Naive thymus-derived CD4-positive, alpha-beta T cell (primary cell): ENCODE measurements at regions of chr1 and their contacts with region 1.

Region 1: DNA sequence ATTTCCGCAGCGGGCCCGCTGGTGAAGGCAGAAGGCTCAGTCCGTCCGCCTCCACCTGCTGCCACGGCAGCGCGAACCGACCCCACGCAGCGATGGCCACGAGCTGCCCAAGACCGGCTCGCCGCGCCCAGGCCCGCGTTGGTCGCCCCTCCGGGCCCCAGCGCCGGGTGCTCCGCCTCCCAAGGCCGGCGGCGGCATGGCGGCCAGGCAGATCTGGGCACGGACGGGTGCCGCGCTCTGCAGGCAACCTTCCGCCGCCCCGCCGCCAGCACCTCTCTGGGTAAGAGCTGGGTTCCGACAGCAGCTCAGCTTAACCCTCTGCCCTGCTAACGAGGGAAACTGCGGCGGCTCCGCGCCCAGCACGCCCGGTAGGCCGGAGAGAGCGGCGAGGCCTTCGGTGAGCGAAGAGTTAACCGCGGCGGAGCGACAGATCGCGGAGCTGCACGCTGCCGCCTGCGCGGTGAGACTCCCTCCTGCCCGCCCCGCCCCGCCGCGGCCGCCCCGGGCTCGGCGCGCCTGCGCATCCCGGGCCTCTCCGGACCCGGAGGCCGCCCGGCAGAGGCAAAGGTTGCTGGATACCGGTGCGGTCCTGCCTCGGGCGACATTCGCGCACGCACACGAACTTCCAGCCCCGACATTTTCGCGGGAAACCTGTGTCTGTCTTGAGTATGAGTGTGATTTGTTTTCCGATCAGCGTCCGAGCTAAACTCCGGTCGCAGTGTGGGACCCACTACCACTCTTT is at the start of gene C1orf53:
- DNase-seq: peak; percentile 58 to 87 (median 74)
- ATAC-seq: peak; percentile 94
- H3K4me3 ChIP-seq: peak within 1 kb of the TSS; percentile 71
- H3K4me3 Mint-ChIP-seq: peak within 1 kb of the TSS; percentile 79 to 97 (median 92)
- H3K27ac ChIP-seq: peak within 1 kb of the TSS; percentile 50
- H3K27ac Mint-ChIP-seq: peak within 1 kb of the TSS; percentile 7 to 82 (median 79)
- H3K4me1 ChIP-seq: peaks cover 4% of the 10 kb centered on the region in 2 donors
- H3K4me1 Mint-ChIP-seq: peaks cover 6 to 19% (median 14%) of the 10 kb centered on the region in 7 donors
- H3K27me3 ChIP-seq: peaks cover 0 to 23% of the 10 kb centered on the region in 2 donors
- H3K27me3 Mint-ChIP-seq: peaks cover 46 to 68% (median 54%) of the 10 kb centered on the region in 5 donors
- total RNA-seq, gene C1orf53: not detected

Region 2: GRCh38 chr1:197146197-197146889 is 756.3 kb before region 1 on chr1 and contains the start of gene ASPM:
- CTCF ChIA-PET with region 1: no interaction called
- POLR2A ChIA-PET with region 1: no interaction called
- intact Hi-C with region 1: loop called in 1 of 2 experiments (anchors 5 kb)
- DNase-seq: peak; percentile 87 to 95 (median 93)
- ATAC-seq: peak; percentile 99
- H3K4me3 ChIP-seq: peak within 1 kb of the TSS; percentile 71
- H3K4me3 Mint-ChIP-seq: peak within 1 kb of the TSS; percentile 89 to 98 (median 92)
- H3K27ac ChIP-seq: peak within 1 kb of the TSS; percentile 74
- H3K27ac Mint-ChIP-seq: peak within 1 kb of the TSS; percentile 76 to 96 (median 94)
- H3K4me1 ChIP-seq: peaks cover 0 to 6% of the 10 kb centered on the region in 2 donors
- H3K4me1 Mint-ChIP-seq: peaks cover 7 to 23% (median 11%) of the 10 kb centered on the region in 7 donors
- H3K27me3 ChIP-seq: no peaks in the 10 kb centered on the region
- H3K27me3 Mint-ChIP-seq: peaks cover 0 to 11% (median 4%) of the 10 kb centered on the region in 5 donors
- total RNA-seq, gene ASPM: 0.08 to 48.8 (median 0.24) TPM

Region 3: DNA sequence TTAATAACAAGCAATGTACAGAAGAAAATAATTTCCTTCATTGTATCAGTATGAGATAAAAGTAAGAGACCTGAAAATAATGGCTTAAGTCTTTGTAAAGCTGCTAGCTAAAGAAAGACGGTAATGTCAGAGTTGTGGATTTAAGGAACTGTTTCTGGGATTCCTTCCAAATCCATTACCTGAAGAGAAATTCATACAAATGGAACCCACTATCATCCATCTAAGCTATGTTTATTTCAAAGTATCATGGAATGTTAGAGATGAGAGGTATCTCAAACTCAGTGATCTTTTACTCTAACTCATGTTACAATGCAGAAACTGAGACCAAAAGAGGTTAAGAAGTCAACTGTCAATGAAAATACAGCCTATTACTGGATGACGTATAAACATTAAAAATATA is 325.0 kb before region 1 on chr1:
- CTCF ChIA-PET with region 1: no interaction called
- POLR2A ChIA-PET with region 1: no interaction called
- intact Hi-C with region 1: no loop called
- DNase-seq: no peak
- ATAC-seq: no peak
- H3K4me3 ChIP-seq: no peak overlapping the region
- H3K4me3 Mint-ChIP-seq: no peak overlapping the region
- H3K27ac ChIP-seq: no peak overlapping the region
- H3K27ac Mint-ChIP-seq: no peak overlapping the region
- H3K4me1 ChIP-seq: no peaks in the 10 kb centered on the region
- H3K4me1 Mint-ChIP-seq: peaks cover 0 to 2% (median 0%) of the 10 kb centered on the region in 7 donors
- H3K27me3 ChIP-seq: no peaks in the 10 kb centered on the region
- H3K27me3 Mint-ChIP-seq: no peaks in the 10 kb centered on the region

Region 4: DNA sequence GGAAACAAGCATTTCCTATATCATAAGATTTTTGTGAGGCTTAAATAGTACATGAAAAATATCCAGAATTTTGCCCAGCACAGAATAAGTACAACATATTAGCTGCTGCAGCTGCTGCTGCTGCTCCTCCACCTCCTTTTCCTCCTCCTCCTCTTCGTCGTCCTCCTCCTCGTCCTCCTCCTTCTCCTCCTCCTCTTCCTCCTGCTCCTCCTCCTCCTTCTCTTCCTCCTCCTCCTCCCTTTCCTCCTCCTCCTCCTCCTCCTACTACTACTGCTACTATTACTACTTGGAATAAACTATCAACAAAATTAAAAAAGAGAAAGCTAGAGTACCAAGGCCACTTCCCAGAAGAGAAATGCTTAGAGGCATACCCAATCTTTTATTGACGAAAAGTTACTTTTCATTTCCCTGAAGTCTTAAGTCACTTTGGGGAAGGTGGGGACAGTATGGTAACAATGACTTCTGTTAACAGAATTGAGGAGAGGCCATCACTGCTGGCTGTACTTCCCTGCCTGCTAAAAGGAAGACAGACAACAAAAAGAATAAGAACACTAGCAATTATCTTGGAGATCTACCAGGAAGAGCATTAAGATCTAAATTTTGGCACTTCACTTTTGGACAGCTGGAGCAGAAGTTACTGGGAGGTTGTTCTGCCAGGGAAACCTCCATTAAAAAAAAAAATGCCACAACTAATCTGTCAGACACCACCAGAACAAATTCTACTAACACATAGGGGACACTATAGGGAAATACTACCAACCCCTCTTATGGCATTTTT is 134.4 kb before region 1 on chr1:
- CTCF ChIA-PET with region 1: no interaction called
- POLR2A ChIA-PET with region 1: no interaction called
- intact Hi-C with region 1: no loop called
- DNase-seq: no peak
- ATAC-seq: no peak
- H3K4me3 ChIP-seq: no peak overlapping the region
- H3K4me3 Mint-ChIP-seq: peak overlapping the region in 6 of 10 donors; percentile 8 to 59 (median 31)
- H3K27ac ChIP-seq: no peak overlapping the region
- H3K27ac Mint-ChIP-seq: peak overlapping the region in 8 of 9 donors; percentile 1 to 76 (median 52)
- H3K4me1 ChIP-seq: peaks cover 11 to 14% of the 10 kb centered on the region in 2 donors
- H3K4me1 Mint-ChIP-seq: peaks cover 35 to 86% (median 80%) of the 10 kb centered on the region in 7 donors
- H3K27me3 ChIP-seq: no peaks in the 10 kb centered on the region
- H3K27me3 Mint-ChIP-seq: no peaks in the 10 kb centered on the region

Region 5: DNA sequence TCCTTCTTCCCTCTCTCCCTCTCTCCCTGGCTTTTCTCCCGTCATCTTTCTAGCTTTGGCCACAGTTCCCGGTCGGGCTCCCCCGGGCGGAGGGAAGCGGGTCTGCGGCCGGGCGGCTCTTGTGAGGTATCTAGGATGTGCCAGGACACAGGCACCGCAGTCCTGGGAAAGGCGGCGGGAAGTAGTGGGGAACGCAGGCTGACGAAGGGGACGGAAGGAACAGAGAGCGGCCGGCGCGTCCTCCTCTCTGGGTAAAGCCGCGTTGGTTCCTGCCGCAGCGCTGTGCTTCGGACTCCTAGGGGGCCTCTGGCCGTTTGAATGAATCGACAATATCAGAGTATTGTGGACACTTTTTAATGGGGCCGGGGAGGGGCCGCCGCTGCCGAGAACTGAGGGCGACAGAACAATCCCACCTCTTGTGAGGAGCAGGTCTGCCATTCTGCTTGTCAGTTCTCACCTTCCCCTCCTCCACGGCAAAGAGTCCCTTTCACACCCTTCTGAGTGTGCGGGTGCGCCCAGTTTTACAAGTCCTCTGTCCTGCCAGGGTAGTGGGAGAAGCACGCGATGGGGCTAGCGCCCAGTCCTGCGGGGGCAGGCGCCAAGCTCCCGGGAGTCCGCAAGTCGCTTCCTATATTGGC is 13.4 kb after region 1 on chr1:
- CTCF ChIA-PET with region 1: interaction called, 4 read pairs
- POLR2A ChIA-PET with region 1: interaction called, 3 read pairs
- intact Hi-C with region 1: loop called (anchors 1 kb)
- DNase-seq: peak in 1 of 9 donors; percentile 9
- ATAC-seq: no peak
- H3K4me3 ChIP-seq: no peak overlapping the region
- H3K4me3 Mint-ChIP-seq: peak overlapping the region in 9 of 10 donors; percentile 44 to 83 (median 68)
- H3K27ac ChIP-seq: no peak overlapping the region
- H3K27ac Mint-ChIP-seq: peak overlapping the region in 1 of 9 donors; percentile 60
- H3K4me1 ChIP-seq: peaks cover 59 to 72% of the 10 kb centered on the region in 2 donors
- H3K4me1 Mint-ChIP-seq: peaks cover 60 to 93% (median 85%) of the 10 kb centered on the region in 7 donors
- H3K27me3 ChIP-seq: peaks cover 69 to 84% of the 10 kb centered on the region in 2 donors
- H3K27me3 Mint-ChIP-seq: peaks cover 92 to 100% (median 96%) of the 10 kb centered on the region in 5 donors

Region 6: GRCh38 chr1:198072177-198072576 is 169.6 kb after region 1 on chr1:
- CTCF ChIA-PET with region 1: no interaction called
- POLR2A ChIA-PET with region 1: no interaction called
- intact Hi-C with region 1: no loop called
- DNase-seq: no peak
- ATAC-seq: no peak
- H3K4me3 ChIP-seq: no peak overlapping the region
- H3K4me3 Mint-ChIP-seq: no peak overlapping the region
- H3K27ac ChIP-seq: no peak overlapping the region
- H3K27ac Mint-ChIP-seq: no peak overlapping the region
- H3K4me1 ChIP-seq: no peaks in the 10 kb centered on the region
- H3K4me1 Mint-ChIP-seq: no peaks in the 10 kb centered on the region
- H3K27me3 ChIP-seq: peaks cover 0 to 3% of the 10 kb centered on the region in 2 donors
- H3K27me3 Mint-ChIP-seq: peaks cover 0 to 41% (median 20%) of the 10 kb centered on the region in 5 donors